Endothelial cell of umbilical vein (primary cell): ENCODE measurements at regions of chr18 and their contacts with region 1.

Region 1: DNA sequence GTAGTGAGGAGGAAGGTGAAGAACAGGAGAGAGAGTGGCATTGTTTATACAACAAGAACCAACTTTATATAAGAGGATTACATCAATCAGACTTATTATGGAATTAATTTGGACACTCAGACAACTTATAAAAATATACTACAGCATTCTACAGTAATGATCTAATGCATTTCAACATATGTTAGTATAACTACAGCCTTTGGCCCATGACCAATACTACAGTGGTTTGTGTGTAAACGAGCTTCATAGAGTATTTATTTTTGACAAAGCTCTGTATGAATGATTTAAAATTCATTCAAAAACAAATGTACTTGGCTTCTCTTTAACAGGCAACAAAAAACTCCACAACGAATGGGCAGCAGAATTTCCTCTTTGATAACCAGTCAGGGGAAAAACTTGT is 72.8 kb downstream of the ZNF521 start:
- DNase-seq: peak; percentile 51
- H3K4me3 ChIP-seq: peak overlapping the region in 1 of 3 experiments; percentile 60
- H3K27ac ChIP-seq: peak overlapping the region; percentile 51
- H3K4me1 ChIP-seq: peaks cover 93% of the 10 kb centered on the region
- H3K27me3 ChIP-seq: no peaks in the 10 kb centered on the region
- CTCF ChIP-seq: no peak
- POLR2A ChIP-seq: no peak

Region 2: DNA sequence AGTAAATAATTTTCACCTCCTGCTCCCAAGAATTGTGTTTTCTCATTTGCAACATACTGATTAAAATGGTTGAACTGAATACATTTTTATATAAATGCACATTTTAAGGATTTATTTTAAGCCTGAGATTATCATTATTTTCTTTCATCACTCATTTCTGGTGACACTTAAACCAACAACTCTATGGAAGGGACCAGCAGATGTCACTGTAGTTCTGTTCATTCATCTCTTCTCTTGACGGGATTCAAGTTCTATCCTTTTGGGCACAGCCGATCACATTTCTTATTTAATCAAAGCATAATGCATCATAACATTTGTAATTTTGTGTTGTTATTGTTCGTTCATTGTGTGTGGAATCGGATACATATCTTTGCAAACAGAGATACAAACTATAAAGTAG is 400.8 kb before region 1 on chr18:
- CTCF ChIA-PET with region 1: no interaction called
- POLR2A ChIA-PET with region 1: no interaction called
- dilution Hi-C with region 1: no loop called
- intact Hi-C with region 1: loop called (anchors 2 kb)
- DNase-seq: peak; percentile 75
- H3K4me3 ChIP-seq: no peak overlapping the region
- H3K27ac ChIP-seq: no peak overlapping the region
- H3K4me1 ChIP-seq: peaks cover 11% of the 10 kb centered on the region
- H3K27me3 ChIP-seq: no peaks in the 10 kb centered on the region
- CTCF ChIP-seq: peak; percentile 23 to 44
- POLR2A ChIP-seq: no peak

Region 3: GRCh38 chr18:25253136-25253535 is 26.0 kb before region 1 on chr18:
- CTCF ChIA-PET with region 1: interaction called, 6 read pairs
- POLR2A ChIA-PET with region 1: no interaction called
- dilution Hi-C with region 1: no loop called
- intact Hi-C with region 1: loop called (anchors 1 kb)
- DNase-seq: peak; percentile 63
- H3K4me3 ChIP-seq: no peak overlapping the region
- H3K27ac ChIP-seq: peak overlapping the region; percentile 74
- H3K4me1 ChIP-seq: peaks cover 61% of the 10 kb centered on the region
- H3K27me3 ChIP-seq: no peaks in the 10 kb centered on the region
- CTCF ChIP-seq: no peak
- POLR2A ChIP-seq: no peak

Region 4: GRCh38 chr18:26487437-26487836 is 1208.3 kb after region 1 on chr18:
- CTCF ChIA-PET with region 1: no interaction called
- POLR2A ChIA-PET with region 1: no interaction called
- dilution Hi-C with region 1: no loop called
- intact Hi-C with region 1: no loop called
- DNase-seq: no peak
- H3K4me3 ChIP-seq: no peak overlapping the region
- H3K27ac ChIP-seq: no peak overlapping the region
- H3K4me1 ChIP-seq: no peaks in the 10 kb centered on the region
- H3K27me3 ChIP-seq: no peaks in the 10 kb centered on the region
- CTCF ChIP-seq: no peak
- POLR2A ChIP-seq: no peak